GM12878 (cell line): ENCODE measurements at regions of chr11 and their contacts with region 1.

Region 1: DNA sequence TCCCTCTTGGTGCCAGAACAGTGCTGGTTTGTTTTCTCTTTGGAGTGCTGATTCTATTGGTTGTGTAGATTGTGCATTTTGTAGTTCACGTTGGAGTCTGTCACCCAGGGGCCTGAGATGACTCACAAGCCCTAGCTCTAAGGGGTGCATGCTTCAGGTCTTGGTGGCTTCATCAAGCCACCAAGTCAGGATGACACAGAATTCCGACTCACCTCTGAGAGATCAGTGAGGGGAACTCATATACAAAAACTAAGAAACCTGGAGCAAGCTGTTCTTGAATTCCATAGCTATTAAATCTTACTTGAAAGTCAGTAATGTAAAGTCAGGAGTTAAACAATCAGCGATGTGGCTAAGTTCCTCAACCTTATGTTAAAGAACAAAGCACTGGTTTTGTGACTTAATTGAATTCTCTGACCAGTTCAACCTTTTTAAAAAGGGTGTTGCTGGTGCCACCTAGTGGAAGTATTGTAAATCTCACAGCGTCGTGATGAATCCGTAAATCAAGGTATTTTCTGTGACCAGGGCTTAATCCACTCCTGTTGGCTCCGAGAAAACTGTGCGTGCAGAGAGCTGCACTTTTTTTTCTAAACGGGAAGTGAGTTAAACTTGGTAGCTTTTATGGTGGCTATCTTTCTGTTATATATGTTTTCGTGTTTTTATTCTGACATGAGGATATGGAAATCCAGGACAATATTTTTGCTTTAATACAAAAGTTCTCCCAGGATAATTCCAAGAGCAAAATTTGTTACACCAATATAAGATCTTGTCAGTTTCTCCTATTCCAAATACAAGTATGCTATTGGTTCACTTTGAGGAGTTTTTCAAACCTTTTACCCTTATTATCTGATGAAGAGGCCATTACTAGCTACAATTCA is 14.6 kb downstream of the MMP13 start:
- DNase-seq: peak; percentile 37
- ATAC-seq: peak; percentile 92
- H3K4me3 ChIP-seq: no peak overlapping the region
- H3K27ac ChIP-seq: no peak overlapping the region
- H3K4me1 ChIP-seq: no peaks in the 10 kb centered on the region
- H3K27me3 ChIP-seq: no peaks in the 10 kb centered on the region
- CTCF ChIP-seq: peak; percentile 63 to 83 (median 79)
- EP300 ChIP-seq: no peak
- POLR2A ChIP-seq: no peak
- RAD21 ChIP-seq: peak; percentile 81

Region 2: GRCh38 chr11:102733232-102733875 is 207.6 kb before region 1 on chr11:
- CTCF ChIA-PET with region 1: interaction called, 19 read pairs
- POLR2A ChIA-PET with region 1: no interaction called
- RAD21 ChIA-PET with region 1: interaction called, 7 read pairs
- SMC1A ChIA-PET with region 1: interaction called, 10 read pairs
- in situ Hi-C with region 1: loop called (anchors 10 kb)
- intact Hi-C with region 1: loop called (anchors 1 kb)
- DNase-seq: no peak
- ATAC-seq: peak; percentile 100
- H3K4me3 ChIP-seq: no peak overlapping the region
- H3K27ac ChIP-seq: no peak overlapping the region
- H3K4me1 ChIP-seq: no peaks in the 10 kb centered on the region
- H3K27me3 ChIP-seq: no peaks in the 10 kb centered on the region
- CTCF ChIP-seq: peak; percentile 77 to 88 (median 83)
- EP300 ChIP-seq: no peak
- POLR2A ChIP-seq: no peak
- RAD21 ChIP-seq: peak; percentile 68

Region 3: GRCh38 chr11:102807921-102808320 is 133.0 kb before region 1 on chr11:
- CTCF ChIA-PET with region 1: interaction called, 6 read pairs
- POLR2A ChIA-PET with region 1: no interaction called
- RAD21 ChIA-PET with region 1: interaction called, 4 read pairs
- SMC1A ChIA-PET with region 1: interaction called, 9 read pairs
- in situ Hi-C with region 1: no loop called
- intact Hi-C with region 1: loop called (anchors 5 kb)
- DNase-seq: no peak
- ATAC-seq: peak; percentile 87
- H3K4me3 ChIP-seq: no peak overlapping the region
- H3K27ac ChIP-seq: no peak overlapping the region
- H3K4me1 ChIP-seq: no peaks in the 10 kb centered on the region
- H3K27me3 ChIP-seq: peaks cover 0 to 2% of the 10 kb centered on the region in 2 experiments; a peak in 1 of 4 replicates
- CTCF ChIP-seq: peak; percentile 23 to 49 (median 23); a peak in 4 of 6 replicates
- EP300 ChIP-seq: no peak
- POLR2A ChIP-seq: no peak
- RAD21 ChIP-seq: no peak

Region 4: GRCh38 chr11:102920118-102920684 is 20.8 kb before region 1 on chr11:
- CTCF ChIA-PET with region 1: interaction called, 334 read pairs
- POLR2A ChIA-PET with region 1: interaction called, 30 read pairs
- RAD21 ChIA-PET with region 1: interaction called, 140 read pairs
- SMC1A ChIA-PET with region 1: interaction called, 216 read pairs
- in situ Hi-C with region 1: no loop called
- intact Hi-C with region 1: no loop called
- DNase-seq: peak; percentile 71
- ATAC-seq: peak; percentile 87
- H3K4me3 ChIP-seq: no peak overlapping the region
- H3K27ac ChIP-seq: no peak overlapping the region
- H3K4me1 ChIP-seq: no peaks in the 10 kb centered on the region; the same call in none of the 2 replicates
- H3K27me3 ChIP-seq: peaks cover 0 to 3% of the 10 kb centered on the region in 2 experiments; a peak in 1 of 4 replicates
- CTCF ChIP-seq: no peak
- EP300 ChIP-seq: peak; percentile 10 to 47; a peak in 1 of 4 replicates
- POLR2A ChIP-seq: no peak
- RAD21 ChIP-seq: no peak

Region 5: DNA sequence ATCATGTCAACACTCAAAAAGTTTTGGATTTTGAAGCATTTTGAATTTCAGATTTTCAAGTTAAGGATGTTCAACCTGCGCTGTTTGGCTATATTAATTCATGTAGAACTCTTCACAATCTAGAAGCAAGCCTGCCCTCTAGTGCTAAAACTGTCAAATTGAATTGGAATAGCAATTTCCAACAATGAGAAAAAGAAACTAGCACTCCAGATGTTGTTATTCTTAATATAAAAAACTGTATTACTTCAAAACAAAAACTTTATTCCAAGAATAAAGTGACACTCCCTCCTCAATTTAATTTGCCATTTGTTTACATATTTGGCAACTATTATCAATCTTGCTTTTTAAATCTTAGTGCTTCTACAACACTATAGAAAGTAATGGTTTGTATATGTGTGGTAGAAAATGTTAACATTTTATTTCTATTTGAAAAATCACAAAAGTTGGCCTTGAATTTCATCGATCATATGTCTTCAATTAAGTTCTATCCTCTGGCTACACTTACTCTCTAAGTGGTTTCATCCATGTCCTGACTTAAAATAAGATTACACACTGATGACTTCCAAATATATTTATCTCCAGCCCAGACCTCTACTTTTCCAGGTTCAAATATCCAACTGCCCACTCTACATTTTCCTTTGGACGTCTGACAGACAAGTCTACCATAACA is 114.4 kb after region 1 on chr11:
- CTCF ChIA-PET with region 1: interaction called, 20 read pairs
- POLR2A ChIA-PET with region 1: no interaction called
- RAD21 ChIA-PET with region 1: interaction called, 11 read pairs
- SMC1A ChIA-PET with region 1: interaction called, 6 read pairs
- in situ Hi-C with region 1: no loop called
- intact Hi-C with region 1: loop called (anchors 2 kb)
- DNase-seq: no peak
- ATAC-seq: peak; percentile 87
- H3K4me3 ChIP-seq: no peak overlapping the region
- H3K27ac ChIP-seq: no peak overlapping the region
- H3K4me1 ChIP-seq: no peaks in the 10 kb centered on the region
- H3K27me3 ChIP-seq: no peaks in the 10 kb centered on the region
- CTCF ChIP-seq: peak; percentile 58 to 68 (median 58)
- EP300 ChIP-seq: no peak
- POLR2A ChIP-seq: no peak
- RAD21 ChIP-seq: peak; percentile 73